Right cardiac atrium (tissue), 5 donors: ENCODE measurements at regions of chr22 and their contacts with region 1.

Region 1: DNA sequence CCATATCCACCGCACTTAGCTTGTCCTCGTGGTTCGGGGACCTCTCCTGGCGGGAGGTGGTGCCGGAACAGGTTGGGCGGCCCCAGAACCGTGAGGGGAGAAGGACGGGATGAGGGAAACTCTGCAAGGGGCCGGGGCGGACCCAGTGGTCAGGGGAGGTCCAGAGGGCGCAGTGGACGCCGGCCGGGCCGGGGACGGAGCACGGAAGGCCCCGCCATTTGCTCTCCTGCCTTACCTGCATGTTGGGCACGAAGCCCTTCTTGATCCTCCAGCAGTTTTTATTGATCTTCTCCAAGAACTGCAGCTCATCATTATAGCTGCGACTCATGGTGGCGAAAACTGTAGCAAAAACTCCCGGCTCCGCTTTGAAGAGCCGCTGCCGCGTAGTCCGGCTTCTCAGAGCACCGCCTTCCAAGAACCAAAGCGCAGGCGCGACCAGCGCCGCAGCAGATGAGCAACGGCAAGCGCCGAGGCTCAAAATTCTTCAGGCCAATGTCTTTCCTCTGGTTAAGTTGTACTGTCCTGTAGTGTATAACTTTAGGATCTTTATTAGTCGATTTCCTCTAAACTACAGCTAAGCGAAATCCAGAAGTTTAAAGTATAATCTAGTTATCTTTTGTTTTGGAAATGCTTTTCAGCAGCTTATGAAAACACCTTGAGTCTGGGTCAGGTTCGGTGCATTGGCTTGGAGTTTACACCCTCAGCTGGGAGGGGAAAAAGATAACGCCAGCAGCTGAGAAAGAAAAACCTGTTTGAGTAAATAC is at the start of gene RTCB:
- DNase-seq: peak; percentile 95 to 98 (median 97)
- ATAC-seq: peak; percentile 89 to 92
- H3K4me3 ChIP-seq: peak within 1 kb of the TSS; percentile 100
- H3K27ac ChIP-seq: peak within 1 kb of the TSS; percentile 39
- H3K4me1 ChIP-seq: peaks cover 6% of the 10 kb centered on the region
- H3K27me3 ChIP-seq: no peaks in the 10 kb centered on the region
- total RNA-seq, gene RTCB: 47.3 to 50.2 (median 48.4) TPM

Region 2: DNA sequence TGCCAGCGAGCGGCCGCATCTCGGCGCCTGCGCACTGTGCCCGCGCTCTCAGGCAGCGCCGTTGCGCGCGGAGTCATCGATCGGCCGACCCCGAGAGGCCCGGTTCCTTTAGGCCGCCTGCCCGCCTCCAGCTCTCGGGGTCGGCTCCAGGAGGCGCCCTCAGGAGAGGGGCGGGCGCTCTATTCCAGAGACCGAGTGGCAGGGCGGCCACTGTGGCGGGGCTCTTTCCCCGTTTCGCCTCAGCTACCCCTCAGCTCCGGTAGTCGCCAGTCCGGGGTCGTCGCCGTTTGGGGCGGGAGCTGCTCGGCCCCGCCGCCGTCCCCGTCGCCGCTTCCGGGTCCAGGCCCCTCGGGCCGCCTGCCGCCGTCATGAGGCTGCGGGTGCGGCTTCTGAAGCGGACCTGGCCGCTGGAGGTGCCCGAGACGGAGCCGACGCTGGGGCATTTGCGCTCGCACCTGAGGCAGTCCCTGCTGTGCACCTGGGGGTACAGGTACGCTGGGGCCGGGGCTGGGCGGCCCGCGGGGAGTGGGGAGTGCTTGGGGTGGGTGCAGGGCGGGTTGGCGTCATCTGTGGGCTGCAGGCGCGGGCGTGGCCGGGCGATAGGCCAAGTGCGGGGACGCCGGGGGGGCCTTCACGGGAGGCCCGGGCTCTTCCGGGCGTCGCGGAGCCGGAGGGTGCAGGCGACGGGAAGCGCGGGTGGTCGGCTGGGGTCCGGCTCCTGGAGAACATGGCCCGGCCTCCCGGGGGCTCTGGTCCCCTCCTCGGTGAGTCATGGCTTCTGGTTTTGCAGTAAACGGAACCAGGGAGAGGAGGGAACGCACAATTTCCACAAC is 62.8 kb after region 1 on chr22 and contains the start of gene FBXO7:
- intact Hi-C with region 1: loop called in 1 of 4 experiments (anchors 10 kb)
- DNase-seq: peak; percentile 94 to 98 (median 97)
- ATAC-seq: peak; percentile 92
- H3K4me3 ChIP-seq: peak within 1 kb of the TSS; percentile 60
- H3K27ac ChIP-seq: peak within 1 kb of the TSS; percentile 77
- H3K4me1 ChIP-seq: peaks cover 7% of the 10 kb centered on the region
- H3K27me3 ChIP-seq: no peaks in the 10 kb centered on the region
- total RNA-seq, gene FBXO7: 45.3 to 52.9 (median 49.3) TPM